ENCODE measurements at regions of chr4 and their contacts with region 1.

Region 1: GRCh38 chr4:81040012-81040659 is 9.6 kb downstream of the BMP3 start:
- DNase-seq: no peak
- H3K4me3 ChIP-seq: no peak overlapping the region
- H3K27ac ChIP-seq: no peak overlapping the region
- H3K27me3 ChIP-seq: peaks cover 3% of the 10 kb centered on the region
- CTCF ChIP-seq: peak; percentile 79

Region 2: GRCh38 chr4:80956421-80956820 is 83.7 kb before region 1 on chr4:
- CTCF ChIA-PET with region 1: interaction called, 10 read pairs
- POLR2A ChIA-PET with region 1: no interaction called
- DNase-seq: no peak
- H3K4me3 ChIP-seq: no peak overlapping the region
- H3K27ac ChIP-seq: no peak overlapping the region
- H3K27me3 ChIP-seq: no peaks in the 10 kb centered on the region
- CTCF ChIP-seq: no peak

Region 3: DNA sequence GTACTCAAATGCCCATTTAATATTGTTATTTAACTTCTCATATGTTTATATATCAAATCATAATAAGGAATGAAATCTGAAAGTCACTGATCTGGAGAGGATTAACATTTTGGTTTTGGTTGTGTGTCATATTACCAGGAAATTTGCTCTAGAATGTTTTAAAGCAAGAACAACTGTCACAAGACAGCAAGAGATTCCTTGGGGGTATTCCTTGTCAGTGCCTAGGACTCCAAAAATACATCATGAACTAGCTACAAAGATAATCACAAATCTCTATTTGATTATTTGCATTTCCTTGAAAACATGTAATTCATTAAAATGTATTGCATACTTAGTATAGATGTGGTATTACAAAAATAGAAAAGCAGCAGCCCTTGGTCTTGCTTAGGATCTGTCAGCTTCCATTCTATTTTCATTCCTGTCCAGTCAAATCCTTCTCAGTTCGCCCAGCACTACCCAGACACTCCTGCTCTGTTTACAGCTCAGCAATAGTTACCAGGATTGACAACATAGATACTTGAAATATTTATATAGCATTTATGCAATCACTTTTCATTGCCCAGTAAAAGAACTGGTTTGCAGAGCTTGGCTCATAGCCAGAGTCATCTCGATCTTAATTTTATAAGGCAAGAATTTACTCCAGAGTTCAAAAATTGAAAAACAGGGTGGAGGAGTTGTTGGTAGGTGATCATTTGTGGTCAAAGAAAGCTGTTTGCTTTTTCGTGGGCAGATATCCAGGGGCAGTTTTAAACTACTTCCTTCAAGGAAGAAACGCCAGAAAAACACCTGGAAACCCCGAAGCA is 18.8 kb before region 1 on chr4:
- CTCF ChIA-PET with region 1: interaction called, 14 read pairs
- POLR2A ChIA-PET with region 1: no interaction called
- DNase-seq: no peak
- H3K4me3 ChIP-seq: no peak overlapping the region
- H3K27ac ChIP-seq: no peak overlapping the region
- H3K27me3 ChIP-seq: peaks cover 8% of the 10 kb centered on the region
- CTCF ChIP-seq: no peak

Region 4: DNA sequence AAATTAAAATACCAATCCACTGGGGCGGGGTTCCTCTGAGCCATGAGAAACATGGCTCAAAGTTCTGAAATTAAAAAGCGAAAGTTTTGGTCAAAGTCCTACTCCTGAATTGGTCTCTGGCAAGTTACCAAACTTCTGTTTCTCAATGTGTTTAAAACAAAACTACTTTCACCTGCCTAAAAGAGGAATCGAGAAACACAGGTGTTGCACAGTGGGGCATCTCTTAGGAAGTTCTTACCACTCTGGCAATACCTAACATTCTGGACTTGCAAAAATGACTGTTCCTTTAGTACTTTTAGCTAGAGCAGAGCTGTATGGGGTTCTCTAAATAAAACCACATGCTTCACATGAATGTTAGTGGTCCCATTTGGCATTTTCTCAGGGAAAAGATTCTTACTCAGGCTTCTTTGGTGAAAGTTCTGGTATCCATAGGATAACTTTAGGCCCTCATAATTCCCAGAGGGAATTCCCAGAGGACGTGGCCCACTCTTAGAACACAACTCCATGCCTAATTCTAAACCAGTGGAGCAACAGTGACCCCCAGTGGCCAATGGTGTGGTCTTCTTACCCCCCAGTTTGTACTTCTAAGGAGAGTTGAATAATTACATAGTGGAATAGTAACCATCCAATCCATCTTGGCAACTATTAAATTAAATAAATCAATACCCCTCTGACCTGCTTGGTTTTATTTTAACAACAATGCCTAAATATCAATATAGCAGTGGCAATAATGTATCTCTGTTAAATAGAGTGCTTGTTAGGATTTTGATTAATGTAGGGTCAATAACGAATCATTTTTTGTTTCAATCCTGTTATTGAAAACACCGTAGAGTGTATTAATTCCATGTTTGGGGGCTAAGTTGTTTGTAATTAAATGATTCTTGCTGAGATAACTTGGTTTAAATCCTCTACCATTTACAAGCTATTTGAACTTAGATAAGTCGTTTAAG is 12.3 kb after region 1 on chr4:
- CTCF ChIA-PET with region 1: interaction called, 48 read pairs
- POLR2A ChIA-PET with region 1: no interaction called
- DNase-seq: peak; percentile 34
- H3K4me3 ChIP-seq: no peak overlapping the region
- H3K27ac ChIP-seq: no peak overlapping the region
- H3K27me3 ChIP-seq: peaks cover 16% of the 10 kb centered on the region
- CTCF ChIP-seq: peak; percentile 84

Region 5: DNA sequence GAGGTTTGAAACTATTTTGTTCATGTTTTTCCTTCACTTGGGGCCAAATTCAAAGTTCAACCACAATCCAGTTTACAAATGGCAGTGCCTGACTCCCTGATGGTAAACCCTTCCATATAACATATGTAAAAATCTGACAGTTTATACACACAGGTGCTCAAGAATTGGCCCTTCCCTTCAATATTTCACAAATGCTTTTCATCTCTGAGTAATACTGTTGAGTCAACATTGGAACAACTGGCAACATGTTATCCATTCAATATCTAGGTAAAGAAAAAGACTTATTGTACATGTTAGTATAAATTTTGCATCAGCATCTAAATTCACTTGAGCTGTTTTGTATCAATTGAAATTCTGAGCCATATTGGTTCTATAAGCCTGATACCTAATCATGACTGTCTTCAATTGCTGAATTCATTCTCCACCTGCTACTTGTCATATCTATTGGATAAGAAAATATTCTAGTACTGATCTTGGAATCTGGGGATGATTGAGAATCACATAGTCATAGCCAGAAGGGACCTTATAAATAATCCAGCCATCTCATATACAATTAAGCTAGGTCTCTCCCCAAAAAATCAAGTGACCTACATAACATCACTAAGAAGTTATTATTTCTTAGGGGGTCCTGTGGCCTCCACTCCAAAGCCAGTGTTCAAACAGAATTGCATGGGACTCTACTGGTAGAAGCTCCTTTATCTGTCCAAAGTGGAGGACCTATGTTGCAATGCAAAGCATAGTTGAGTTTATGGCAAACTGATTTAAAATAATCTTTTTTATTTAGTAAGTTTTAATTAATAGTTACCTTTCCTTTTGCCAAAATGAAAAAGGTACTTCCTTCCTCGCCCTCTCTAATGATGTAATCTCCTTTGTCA is 112.9 kb after region 1 on chr4:
- CTCF ChIA-PET with region 1: no interaction called
- POLR2A ChIA-PET with region 1: no interaction called
- DNase-seq: no peak
- H3K4me3 ChIP-seq: no peak overlapping the region
- H3K27ac ChIP-seq: no peak overlapping the region
- H3K27me3 ChIP-seq: no peaks in the 10 kb centered on the region
- CTCF ChIP-seq: no peak

Region 6: GRCh38 chr4:81290813-81291212 is 250.7 kb after region 1 on chr4:
- CTCF ChIA-PET with region 1: no interaction called
- POLR2A ChIA-PET with region 1: no interaction called
- DNase-seq: no peak
- H3K4me3 ChIP-seq: no peak overlapping the region
- H3K27ac ChIP-seq: no peak overlapping the region
- H3K27me3 ChIP-seq: no peaks in the 10 kb centered on the region
- CTCF ChIP-seq: no peak